ENCODE measurements at regions of chr7 and their contacts with region 1.

Region 1: DNA sequence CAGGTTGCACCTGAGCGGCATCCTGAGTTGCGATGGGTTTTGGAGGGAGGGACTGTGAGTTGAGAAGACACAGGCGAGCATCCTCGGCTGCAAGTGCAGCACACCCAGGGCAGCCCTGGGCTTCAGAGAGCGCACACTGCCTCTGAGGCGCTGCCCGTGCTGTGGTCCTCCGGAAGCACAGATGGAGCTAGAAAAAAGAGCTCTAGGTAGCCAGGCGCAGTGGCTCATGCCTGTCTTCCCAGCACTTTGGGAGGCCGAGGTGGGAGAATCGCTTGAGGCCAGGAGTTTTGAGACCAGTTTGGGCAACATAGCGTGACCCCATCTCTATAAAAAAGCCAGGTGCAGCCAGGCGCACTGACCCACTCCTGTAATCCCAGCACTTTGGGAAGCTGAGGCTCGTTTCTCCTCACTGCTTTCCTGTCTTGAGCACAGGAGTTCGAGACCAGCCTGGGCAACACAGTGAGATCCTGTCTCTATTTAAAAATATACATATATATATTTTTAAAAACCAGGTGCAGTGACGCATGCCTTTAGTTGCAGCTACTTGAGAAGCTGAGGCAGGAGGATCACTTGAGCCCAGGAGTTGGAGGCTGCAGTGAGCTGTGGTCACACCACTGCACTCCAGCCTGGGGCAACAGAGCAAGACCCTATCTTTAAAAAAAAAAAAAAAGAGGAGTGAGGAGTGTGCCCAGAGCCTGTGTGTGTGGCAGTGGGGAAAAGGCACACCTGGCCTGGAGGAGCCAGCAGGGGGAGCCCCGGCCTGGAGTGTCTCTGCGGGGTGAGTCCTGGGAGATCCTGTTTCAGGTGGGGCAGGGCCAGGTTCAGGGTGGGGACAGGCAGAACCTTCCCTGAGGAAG is 9.3 kb upstream of the ARPC1B start:
- DNase-seq: peak; percentile 43 to 79 (median 75)
- ATAC-seq: peak; percentile 94
- H3K4me3 ChIP-seq: no peak overlapping the region
- H3K4me3 Mint-ChIP-seq: no peak overlapping the region
- H3K27ac ChIP-seq: no peak overlapping the region
- H3K27ac Mint-ChIP-seq: no peak overlapping the region
- H3K4me1 ChIP-seq: no peaks in the 10 kb centered on the region
- H3K4me1 Mint-ChIP-seq: no peaks in the 10 kb centered on the region
- H3K27me3 ChIP-seq: no peaks in the 10 kb centered on the region
- H3K27me3 Mint-ChIP-seq: no peaks in the 10 kb centered on the region
- CTCF ChIP-seq: peak; percentile 65

Region 2: GRCh38 chr7:99386584-99387238 is 21.5 kb after region 1 on chr7:
- CTCF ChIA-PET with region 1: interaction called, 46 read pairs
- POLR2A ChIA-PET with region 1: no interaction called
- intact Hi-C with region 1: loop called (anchors 1 kb)
- DNase-seq: peak in 5 of 9 experiments; percentile 47 to 73 (median 60)
- ATAC-seq: peak; percentile 75
- H3K4me3 ChIP-seq: no peak overlapping the region
- H3K4me3 Mint-ChIP-seq: no peak overlapping the region
- H3K27ac ChIP-seq: no peak overlapping the region
- H3K27ac Mint-ChIP-seq: peak overlapping the region; percentile 75
- H3K4me1 ChIP-seq: peaks cover 20% of the 10 kb centered on the region
- H3K4me1 Mint-ChIP-seq: peaks cover 27% of the 10 kb centered on the region
- H3K27me3 ChIP-seq: no peaks in the 10 kb centered on the region
- H3K27me3 Mint-ChIP-seq: no peaks in the 10 kb centered on the region
- CTCF ChIP-seq: peak; percentile 27

Region 3: DNA sequence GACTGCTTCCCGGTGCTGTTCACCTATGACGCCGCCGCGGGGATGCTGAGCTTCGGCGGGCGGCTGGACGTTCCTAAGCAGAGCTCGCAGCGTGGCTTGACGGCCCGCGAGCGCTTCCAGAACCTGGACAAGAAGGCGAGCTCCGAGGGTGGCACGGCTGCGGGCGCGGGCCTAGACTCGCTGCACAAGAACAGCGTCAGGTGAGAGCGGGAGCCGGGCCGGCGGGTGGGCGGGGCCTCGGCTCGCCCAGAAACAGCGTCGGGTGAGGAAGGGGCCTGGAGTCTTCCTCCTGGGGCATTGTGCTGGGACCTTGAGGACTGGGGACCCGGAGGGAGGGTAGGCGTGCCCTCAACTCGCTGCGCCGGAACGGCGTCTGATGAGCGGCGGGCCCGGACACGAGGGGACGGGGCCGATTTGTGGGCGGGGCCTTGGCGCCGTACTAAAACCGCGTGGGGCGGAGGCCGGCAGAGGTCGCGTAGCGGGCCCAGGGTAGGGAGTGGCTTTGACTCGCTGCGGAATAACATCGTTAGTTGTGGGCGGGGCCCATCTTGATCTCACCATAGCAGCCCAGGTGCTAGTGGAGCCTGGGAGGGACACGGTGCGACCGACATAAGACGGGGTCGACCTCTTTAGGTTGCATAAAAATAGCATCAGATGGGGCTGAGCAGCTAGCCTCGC is 27.6 kb after region 1 on chr7:
- CTCF ChIA-PET with region 1: interaction called, 46 read pairs
- POLR2A ChIA-PET with region 1: interaction called, 3 read pairs
- intact Hi-C with region 1: no loop called
- DNase-seq: peak; percentile 61 to 93 (median 87)
- ATAC-seq: peak; percentile 96
- H3K4me3 ChIP-seq: peak overlapping the region; percentile 48 to 50
- H3K4me3 Mint-ChIP-seq: peak overlapping the region; percentile 85
- H3K27ac ChIP-seq: peak overlapping the region; percentile 54 to 78
- H3K27ac Mint-ChIP-seq: peak overlapping the region; percentile 93
- H3K4me1 ChIP-seq: peaks cover 18% of the 10 kb centered on the region
- H3K4me1 Mint-ChIP-seq: peaks cover 17% of the 10 kb centered on the region
- H3K27me3 ChIP-seq: no peaks in the 10 kb centered on the region
- H3K27me3 Mint-ChIP-seq: no peaks in the 10 kb centered on the region
- CTCF ChIP-seq: no peak

Region 4: GRCh38 chr7:99579956-99580777 is 215.0 kb after region 1 on chr7:
- CTCF ChIA-PET with region 1: no interaction called
- POLR2A ChIA-PET with region 1: no interaction called
- intact Hi-C with region 1: loop called in 1 of 2 experiments (anchors 1 kb)
- DNase-seq: peak; percentile 24 to 79 (median 69)
- ATAC-seq: peak; percentile 91
- H3K4me3 ChIP-seq: peak overlapping the region; percentile 63 to 84
- H3K4me3 Mint-ChIP-seq: peak overlapping the region; percentile 93
- H3K27ac ChIP-seq: peak overlapping the region; percentile 4 to 42
- H3K27ac Mint-ChIP-seq: peak overlapping the region; percentile 87
- H3K4me1 ChIP-seq: no peaks in the 10 kb centered on the region
- H3K4me1 Mint-ChIP-seq: peaks cover 18% of the 10 kb centered on the region
- H3K27me3 ChIP-seq: no peaks in the 10 kb centered on the region
- H3K27me3 Mint-ChIP-seq: no peaks in the 10 kb centered on the region
- CTCF ChIP-seq: peak; percentile 54

Measured in CD8-positive, alpha-beta T cell (primary cell).